Kidney (tissue), 22 donors: ENCODE measurements at regions of chr1 and their contacts with region 1.

Region 1: DNA sequence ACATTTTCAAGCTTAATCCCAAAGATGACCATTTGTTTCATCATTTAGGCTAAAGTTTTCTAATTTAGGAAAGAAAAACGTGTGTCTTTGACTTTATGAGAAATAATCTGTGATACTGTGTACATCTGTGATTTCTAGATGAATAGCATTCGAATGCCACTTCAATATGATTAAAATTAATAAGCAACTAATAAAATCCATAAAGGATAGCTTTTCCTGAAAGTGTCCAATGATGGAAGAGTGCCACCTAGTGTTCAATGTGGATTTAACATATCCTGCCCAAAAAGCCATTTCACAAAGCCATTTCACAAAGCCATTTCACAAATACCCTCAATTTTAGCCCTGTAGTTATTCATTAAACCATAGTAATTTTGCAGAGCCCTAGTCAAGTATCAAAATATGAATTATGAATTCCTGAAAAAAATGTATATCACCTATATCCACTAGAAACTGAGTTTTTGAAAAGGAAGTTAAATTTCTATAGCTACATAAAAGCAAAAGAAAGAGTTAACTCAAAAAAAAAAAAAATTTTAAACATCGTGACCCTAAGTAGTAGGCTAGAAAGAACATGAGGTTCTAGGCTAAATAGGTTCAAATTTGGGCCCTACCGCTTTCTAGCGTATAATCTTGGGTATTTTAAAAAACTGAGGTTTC is 19.1 kb downstream of the NME7 start:
- DNase-seq: peak in 2 of 5 donors; percentile 67 to 78
- H3K4me3 ChIP-seq: no peak overlapping the region
- H3K27ac ChIP-seq: no peak overlapping the region
- H3K4me1 ChIP-seq: no peaks in the 10 kb centered on the region
- H3K27me3 ChIP-seq: no peaks in the 10 kb centered on the region
- CTCF ChIP-seq: peak; percentile 81

Region 2: GRCh38 chr1:168609133-168609715 is 739.3 kb before region 1 on chr1:
- intact Hi-C with region 1: loop called (anchors 5 kb)
- DNase-seq: peak; percentile 79 to 91 (median 85)
- H3K4me3 ChIP-seq: peak overlapping the region in 1 of 3 donors; percentile 38
- H3K27ac ChIP-seq: peak overlapping the region; percentile 44 to 51
- H3K4me1 ChIP-seq: peaks cover 0 to 24% (median 16%) of the 10 kb centered on the region in 3 donors
- H3K27me3 ChIP-seq: no peaks in the 10 kb centered on the region
- CTCF ChIP-seq: no peak